KBM-7 (cell line): ENCODE measurements at regions of chr2 and their contacts with region 1.

Region 1: GRCh38 chr2:68467077-68467960 is at the starts of genes APLF and FBXO48:
- DNase-seq: peak; percentile 100

Region 2: GRCh38 chr2:68925295-68925896 is 458.1 kb after region 1 on chr2:
- in situ Hi-C with region 1: loop called (anchors 10 kb)
- DNase-seq: peak; percentile 67

Region 3: GRCh38 chr2:69214898-69215297 is 747.6 kb after region 1 on chr2:
- in situ Hi-C with region 1: no loop called
- DNase-seq: peak; percentile 7